ENCODE measurements at regions of chr7 and their contacts with region 1.

Region 1: GRCh38 chr7:142308326-142308725 is 50.5 kb upstream of the PRSS58 start:
- DNase-seq: no peak
- H3K4me3 ChIP-seq: no peak overlapping the region
- H3K27ac ChIP-seq: no peak overlapping the region
- H3K4me1 ChIP-seq: no peaks in the 10 kb centered on the region
- H3K27me3 ChIP-seq: no peaks in the 10 kb centered on the region
- CTCF ChIP-seq: no peak
- EP300 ChIP-seq: no peak
- POLR2A ChIP-seq: no peak

Region 2: GRCh38 chr7:142338633-142339501 is 30.5 kb after region 1 on chr7:
- intact Hi-C with region 1: loop called in 3 of 4 experiments (anchors 1 to 2 kb)
- DNase-seq: no peak
- H3K4me3 ChIP-seq: no peak overlapping the region
- H3K27ac ChIP-seq: no peak overlapping the region
- H3K4me1 ChIP-seq: no peaks in the 10 kb centered on the region
- H3K27me3 ChIP-seq: no peaks in the 10 kb centered on the region
- CTCF ChIP-seq: no peak
- EP300 ChIP-seq: no peak
- POLR2A ChIP-seq: no peak

Region 3: DNA sequence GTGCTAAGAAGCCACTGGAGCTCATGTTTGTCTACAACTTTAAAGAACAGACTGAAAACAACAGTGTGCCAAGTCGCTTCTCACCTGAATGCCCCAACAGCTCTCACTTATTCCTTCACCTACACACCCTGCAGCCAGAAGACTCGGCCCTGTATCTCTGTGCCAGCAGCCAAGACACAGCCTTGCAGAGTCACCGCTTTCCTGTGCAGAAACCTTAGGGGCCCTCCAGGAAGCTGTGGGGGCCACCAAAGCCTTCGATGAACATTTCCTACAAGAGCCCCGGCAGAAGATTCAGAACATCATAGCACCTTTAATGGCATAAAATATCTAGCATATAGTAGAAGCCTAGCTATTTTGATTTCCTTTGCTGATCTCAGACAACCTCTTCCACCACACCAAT is 37.5 kb after region 1 on chr7:
- intact Hi-C with region 1: loop called in 3 of 4 experiments (anchors 1 to 2 kb)
- DNase-seq: no peak
- H3K4me3 ChIP-seq: no peak overlapping the region
- H3K27ac ChIP-seq: no peak overlapping the region
- H3K4me1 ChIP-seq: no peaks in the 10 kb centered on the region
- H3K27me3 ChIP-seq: no peaks in the 10 kb centered on the region
- CTCF ChIP-seq: no peak
- EP300 ChIP-seq: no peak
- POLR2A ChIP-seq: no peak